ENCODE measurements at regions of chr18 and their contacts with region 1.

Region 1: DNA sequence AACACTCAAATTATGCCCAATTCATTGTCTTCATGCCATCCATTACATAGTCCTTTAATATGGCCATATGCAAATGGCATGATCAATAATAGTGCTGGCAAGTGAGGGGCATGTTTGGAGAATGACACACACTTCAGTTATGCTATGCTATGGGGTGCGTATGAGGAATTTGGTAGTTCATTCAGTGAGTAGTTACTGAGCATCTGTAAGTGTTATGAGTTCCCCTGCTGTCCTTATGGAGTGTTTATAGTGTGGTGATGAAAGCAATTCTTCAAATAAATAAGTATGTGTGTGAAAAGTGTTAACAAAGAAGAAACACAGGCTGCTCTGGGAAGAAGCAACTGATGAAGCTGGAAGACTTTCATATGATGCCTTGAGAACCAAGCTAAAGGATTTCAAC is 383.7 kb upstream of the SLC14A2 start:
- DNase-seq: no peak
- ATAC-seq: no peak
- H3K4me3 ChIP-seq: no peak overlapping the region
- H3K27ac ChIP-seq: no peak overlapping the region
- H3K4me1 ChIP-seq: no peaks in the 10 kb centered on the region
- H3K27me3 ChIP-seq: no peaks in the 10 kb centered on the region
- CTCF ChIP-seq: no peak

Region 2: DNA sequence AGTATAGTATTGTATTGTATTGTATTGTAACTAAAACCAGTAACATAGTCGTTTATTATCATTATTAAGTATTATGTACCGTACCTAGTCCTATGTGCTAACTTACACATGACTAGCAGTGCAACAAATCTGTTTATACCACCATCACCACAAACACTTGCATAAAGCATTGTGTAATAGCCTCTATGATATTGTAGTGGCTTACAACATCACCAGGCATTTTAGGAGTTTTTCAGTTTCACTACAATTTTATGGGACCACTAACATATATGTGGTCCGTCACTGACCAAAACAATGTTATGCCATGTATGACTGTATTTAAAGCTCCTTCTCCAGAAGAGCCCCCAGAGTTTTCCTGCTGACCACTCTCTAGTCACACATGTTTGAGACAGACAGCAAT is 244.7 kb before region 1 on chr18:
- CTCF ChIA-PET with region 1: no interaction called
- POLR2A ChIA-PET with region 1: interaction called, 15 read pairs
- intact Hi-C with region 1: no loop called
- DNase-seq: no peak
- ATAC-seq: no peak
- H3K4me3 ChIP-seq: no peak overlapping the region
- H3K27ac ChIP-seq: no peak overlapping the region
- H3K4me1 ChIP-seq: peaks cover 6% of the 10 kb centered on the region; the same call in 1 of the 2 replicates
- H3K27me3 ChIP-seq: no peaks in the 10 kb centered on the region
- CTCF ChIP-seq: no peak

Region 3: GRCh38 chr18:45324495-45325113 is 93.0 kb after region 1 on chr18:
- CTCF ChIA-PET with region 1: no interaction called
- POLR2A ChIA-PET with region 1: no interaction called
- intact Hi-C with region 1: no loop called
- DNase-seq: peak; percentile 36
- ATAC-seq: no peak
- H3K4me3 ChIP-seq: no peak overlapping the region
- H3K27ac ChIP-seq: no peak overlapping the region
- H3K4me1 ChIP-seq: no peaks in the 10 kb centered on the region
- H3K27me3 ChIP-seq: no peaks in the 10 kb centered on the region
- CTCF ChIP-seq: no peak

Region 4: DNA sequence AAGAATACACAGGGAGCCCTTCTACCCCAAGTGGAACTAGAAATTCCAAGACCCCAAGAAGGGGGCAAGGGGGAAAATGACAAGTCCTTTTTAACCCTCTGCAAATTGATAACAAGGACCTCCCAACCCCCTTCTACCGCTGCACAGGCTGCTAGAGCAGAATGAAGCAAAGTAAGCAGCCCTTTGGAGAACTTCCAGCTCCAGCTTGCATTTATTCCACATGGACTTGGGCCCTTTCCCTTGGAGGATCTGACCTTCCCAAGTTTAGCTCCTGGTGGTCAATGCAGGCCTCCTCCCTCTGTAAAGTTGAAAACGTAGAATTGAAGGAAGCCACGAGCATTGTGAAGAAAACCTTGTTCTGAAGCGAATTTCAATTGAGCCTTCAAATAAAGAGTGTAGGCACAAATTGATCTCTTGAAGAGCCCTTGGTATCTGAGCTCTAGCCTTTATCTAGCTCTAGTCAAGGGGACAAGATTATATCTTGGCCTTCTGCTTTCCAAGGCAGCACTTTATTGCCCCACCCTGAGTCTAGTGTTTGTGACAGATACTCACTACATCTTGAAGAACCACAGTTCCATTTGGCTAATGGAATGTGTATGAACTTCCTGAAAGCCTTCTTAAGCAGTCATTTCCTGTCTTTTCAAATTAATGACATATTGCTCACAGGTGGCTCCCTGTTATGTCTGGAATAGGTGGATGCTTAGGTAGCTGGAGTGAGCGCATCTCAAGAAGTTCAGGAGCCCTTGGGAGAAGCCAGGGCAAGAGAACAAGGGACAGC is 420.9 kb after region 1 on chr18:
- CTCF ChIA-PET with region 1: no interaction called
- POLR2A ChIA-PET with region 1: no interaction called
- intact Hi-C with region 1: no loop called
- DNase-seq: peak; percentile 42
- ATAC-seq: peak; percentile 56
- H3K4me3 ChIP-seq: no peak overlapping the region
- H3K27ac ChIP-seq: no peak overlapping the region
- H3K4me1 ChIP-seq: peaks cover 6% of the 10 kb centered on the region; the same call in 1 of the 2 replicates
- H3K27me3 ChIP-seq: no peaks in the 10 kb centered on the region
- CTCF ChIP-seq: no peak

Measured in PC-3 (cell line).